Psoas muscle (tissue), 8 donors: ENCODE measurements at regions of chr10 and their contacts with region 1.

Region 1: DNA sequence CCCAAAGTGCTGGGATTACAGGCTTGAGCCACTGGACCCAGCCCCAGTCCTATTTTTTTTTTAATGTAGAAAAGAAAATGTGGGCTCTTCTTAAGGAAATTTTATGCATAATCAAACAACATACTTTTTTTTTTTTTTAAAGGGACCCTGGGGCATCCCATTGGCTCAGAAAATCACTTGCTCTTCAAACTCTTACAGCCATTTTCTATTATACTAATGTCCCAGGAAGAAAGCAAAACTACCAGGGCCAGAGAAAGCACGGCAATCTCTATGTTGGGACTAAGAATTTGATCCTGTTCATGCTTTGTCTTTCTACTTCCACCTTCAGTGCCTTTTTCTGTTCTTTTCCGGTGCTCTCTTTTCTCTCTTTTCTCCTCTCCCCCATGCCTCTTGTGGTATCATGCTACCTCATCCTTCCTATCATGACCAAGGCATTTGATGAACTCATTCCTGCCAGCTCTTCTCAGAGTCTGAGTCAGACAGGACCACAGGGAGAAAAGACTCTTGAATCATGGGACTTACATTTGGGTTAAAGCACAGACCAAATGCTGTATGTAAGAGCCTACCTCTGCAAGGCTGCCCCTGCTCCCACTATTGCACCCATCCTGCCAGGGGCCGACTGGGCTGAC is 76.4 kb upstream of the CCNY start:
- DNase-seq: no peak
- ATAC-seq: no peak
- H3K4me3 ChIP-seq: no peak overlapping the region
- H3K27ac ChIP-seq: no peak overlapping the region
- H3K4me1 ChIP-seq: no peaks in the 10 kb centered on the region
- H3K27me3 ChIP-seq: no peaks in the 10 kb centered on the region
- CTCF ChIP-seq: no peak

Region 2: DNA sequence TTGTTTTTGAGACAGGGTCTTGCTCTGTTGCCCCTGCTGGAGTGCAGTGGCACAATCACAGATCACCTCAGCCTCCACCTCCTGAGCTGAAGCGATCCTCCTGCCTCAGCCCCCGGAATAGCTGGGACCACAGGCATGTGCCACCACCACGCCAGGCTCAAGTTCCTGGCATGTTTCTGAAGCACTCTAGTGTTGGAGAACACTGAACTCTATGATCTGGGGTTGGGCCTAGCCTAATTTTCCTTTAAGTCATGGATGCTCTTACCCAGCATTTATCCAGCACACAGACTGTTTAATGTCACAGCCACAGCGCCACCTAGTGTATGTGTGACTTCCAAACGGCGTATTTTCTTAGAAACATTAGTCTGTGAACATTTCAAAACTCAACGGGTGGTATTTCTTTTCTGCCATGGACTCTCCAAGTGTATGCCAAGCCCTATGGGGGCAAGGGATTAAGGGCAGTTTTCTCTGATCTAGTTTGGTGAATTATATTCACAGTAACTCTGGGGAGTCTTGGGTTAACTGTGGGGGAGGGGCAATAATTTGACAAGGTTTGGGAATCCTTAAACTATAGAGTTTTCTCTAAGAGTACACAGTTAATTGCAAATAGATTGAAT is 41.4 kb before region 1 on chr10:
- intact Hi-C with region 1: no loop called
- DNase-seq: peak; percentile 78 to 85
- ATAC-seq: peak; percentile 74 to 85 (median 78)
- H3K4me3 ChIP-seq: peak overlapping the region; percentile 8
- H3K27ac ChIP-seq: peak overlapping the region; percentile 60
- H3K4me1 ChIP-seq: peaks cover 34% of the 10 kb centered on the region
- H3K27me3 ChIP-seq: no peaks in the 10 kb centered on the region
- CTCF ChIP-seq: peak; percentile 83

Region 3: GRCh38 chr10:35339942-35340341 is 80.1 kb after region 1 on chr10:
- intact Hi-C with region 1: no loop called
- DNase-seq: no peak
- ATAC-seq: no peak
- H3K4me3 ChIP-seq: no peak overlapping the region
- H3K27ac ChIP-seq: no peak overlapping the region
- H3K4me1 ChIP-seq: peaks cover 44% of the 10 kb centered on the region
- H3K27me3 ChIP-seq: no peaks in the 10 kb centered on the region
- CTCF ChIP-seq: no peak

Region 4: DNA sequence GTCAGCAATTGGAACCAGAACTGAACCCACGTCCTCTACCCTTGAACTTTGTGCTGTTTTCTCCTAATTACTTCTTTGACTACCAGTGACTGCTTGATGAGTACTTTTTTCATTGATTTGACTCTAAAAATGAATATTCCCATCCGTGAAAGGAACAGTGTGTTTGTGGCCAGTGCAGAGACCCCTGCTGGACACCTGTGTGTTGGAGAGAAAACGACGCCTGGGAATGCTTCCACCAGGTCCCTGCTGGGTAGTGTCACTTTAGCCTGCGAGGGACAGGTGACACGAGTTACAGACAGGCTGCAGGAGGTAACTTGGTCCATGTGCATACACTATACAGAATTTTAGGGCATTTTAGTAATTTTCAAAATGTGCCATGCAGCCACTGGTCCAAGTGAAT is 338.5 kb after region 1 on chr10:
- intact Hi-C with region 1: loop called in 1 of 2 experiments (anchors 10 kb)
- DNase-seq: no peak
- ATAC-seq: no peak
- H3K4me3 ChIP-seq: no peak overlapping the region
- H3K27ac ChIP-seq: no peak overlapping the region
- H3K4me1 ChIP-seq: no peaks in the 10 kb centered on the region
- H3K27me3 ChIP-seq: peaks cover 0 to 6% (median 0%) of the 10 kb centered on the region in 3 donors
- CTCF ChIP-seq: peak; percentile 33